ENCODE measurements at regions of chr3 and their contacts with region 1.

Region 1: GRCh38 chr3:58217209-58217811 is 6.5 kb upstream of the DNASE1L3 start:
- DNase-seq: peak; percentile 27 to 69 (median 45)
- H3K4me3 ChIP-seq: no peak overlapping the region
- H3K4me3 Mint-ChIP-seq: peak overlapping the region in 1 of 7 donors; percentile 21
- H3K27ac ChIP-seq: no peak overlapping the region
- H3K27ac Mint-ChIP-seq: no peak overlapping the region
- H3K4me1 ChIP-seq: peaks cover 6% of the 10 kb centered on the region
- H3K4me1 Mint-ChIP-seq: peaks cover 6 to 15% (median 14%) of the 10 kb centered on the region in 3 donors
- H3K27me3 ChIP-seq: no peaks in the 10 kb centered on the region
- H3K27me3 Mint-ChIP-seq: peaks cover 3 to 6% of the 10 kb centered on the region in 2 donors

Region 2: GRCh38 chr3:57942388-57942787 is 274.9 kb before region 1 on chr3:
- CTCF ChIA-PET with region 1: no interaction called
- POLR2A ChIA-PET with region 1: interaction called, 11 read pairs
- DNase-seq: no peak
- H3K4me3 ChIP-seq: no peak overlapping the region
- H3K4me3 Mint-ChIP-seq: no peak overlapping the region
- H3K27ac ChIP-seq: no peak overlapping the region
- H3K27ac Mint-ChIP-seq: no peak overlapping the region
- H3K4me1 ChIP-seq: no peaks in the 10 kb centered on the region
- H3K4me1 Mint-ChIP-seq: no peaks in the 10 kb centered on the region
- H3K27me3 ChIP-seq: no peaks in the 10 kb centered on the region
- H3K27me3 Mint-ChIP-seq: peaks cover 0 to under 1% of the 10 kb centered on the region in 2 donors

Region 3: DNA sequence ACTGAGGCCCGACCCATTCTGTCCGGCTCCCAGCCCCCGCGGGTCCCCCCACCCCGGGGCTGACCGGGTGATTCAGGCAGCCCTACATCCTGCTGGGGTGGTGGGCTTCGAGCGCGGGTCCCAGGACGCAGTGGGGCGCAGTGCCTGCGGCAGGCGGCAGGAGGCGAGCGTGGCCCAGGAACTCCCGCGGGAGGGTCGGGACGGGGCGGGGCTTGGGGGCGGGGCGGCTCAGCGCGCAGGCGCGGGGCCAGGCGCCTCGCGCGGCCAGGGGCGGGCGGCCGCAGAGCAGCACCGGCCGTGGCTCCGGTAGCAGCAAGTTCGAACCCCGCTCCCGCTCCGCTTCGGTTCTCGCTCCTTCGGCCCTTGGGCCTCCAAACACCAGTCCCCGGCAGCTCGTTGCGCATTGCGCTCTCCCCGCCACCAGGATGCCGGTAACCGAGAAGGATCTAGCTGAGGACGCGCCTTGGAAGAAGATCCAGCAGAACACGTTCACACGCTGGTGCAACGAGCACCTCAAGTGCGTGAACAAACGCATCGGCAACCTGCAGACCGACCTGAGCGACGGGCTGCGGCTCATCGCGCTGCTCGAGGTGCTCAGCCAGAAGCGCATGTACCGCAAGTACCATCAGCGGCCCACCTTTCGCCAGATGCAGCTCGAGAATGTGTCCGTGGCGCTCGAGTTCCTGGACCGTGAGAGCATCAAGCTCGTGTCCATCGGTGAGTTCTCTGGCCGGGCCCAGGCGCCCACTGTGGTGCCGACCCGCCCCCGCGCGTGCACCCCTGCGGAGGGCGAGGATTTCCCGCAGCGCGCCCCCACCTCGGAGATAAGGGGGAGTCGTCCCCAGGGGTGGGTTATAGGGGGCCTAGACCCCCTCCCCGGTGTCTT is 208.9 kb before region 1 on chr3 and contains the start of gene FLNB:
- CTCF ChIA-PET with region 1: interaction called, 13 read pairs
- POLR2A ChIA-PET with region 1: interaction called, 3 read pairs
- DNase-seq: peak; percentile 68 to 82 (median 73)
- H3K4me3 ChIP-seq: peak within 1 kb of the TSS; percentile 99
- H3K4me3 Mint-ChIP-seq: peak within 1 kb of the TSS; percentile 73 to 93 (median 90)
- H3K27ac ChIP-seq: peak within 1 kb of the TSS; percentile 73
- H3K27ac Mint-ChIP-seq: peak within 1 kb of the TSS; percentile 17 to 92 (median 74)
- H3K4me1 ChIP-seq: peaks cover 29% of the 10 kb centered on the region
- H3K4me1 Mint-ChIP-seq: peaks cover 27 to 45% (median 30%) of the 10 kb centered on the region in 3 donors
- H3K27me3 ChIP-seq: no peaks in the 10 kb centered on the region
- H3K27me3 Mint-ChIP-seq: no peaks in the 10 kb centered on the region
- total RNA-seq, gene FLNB: 11.5 to 12.8 TPM

Region 4: DNA sequence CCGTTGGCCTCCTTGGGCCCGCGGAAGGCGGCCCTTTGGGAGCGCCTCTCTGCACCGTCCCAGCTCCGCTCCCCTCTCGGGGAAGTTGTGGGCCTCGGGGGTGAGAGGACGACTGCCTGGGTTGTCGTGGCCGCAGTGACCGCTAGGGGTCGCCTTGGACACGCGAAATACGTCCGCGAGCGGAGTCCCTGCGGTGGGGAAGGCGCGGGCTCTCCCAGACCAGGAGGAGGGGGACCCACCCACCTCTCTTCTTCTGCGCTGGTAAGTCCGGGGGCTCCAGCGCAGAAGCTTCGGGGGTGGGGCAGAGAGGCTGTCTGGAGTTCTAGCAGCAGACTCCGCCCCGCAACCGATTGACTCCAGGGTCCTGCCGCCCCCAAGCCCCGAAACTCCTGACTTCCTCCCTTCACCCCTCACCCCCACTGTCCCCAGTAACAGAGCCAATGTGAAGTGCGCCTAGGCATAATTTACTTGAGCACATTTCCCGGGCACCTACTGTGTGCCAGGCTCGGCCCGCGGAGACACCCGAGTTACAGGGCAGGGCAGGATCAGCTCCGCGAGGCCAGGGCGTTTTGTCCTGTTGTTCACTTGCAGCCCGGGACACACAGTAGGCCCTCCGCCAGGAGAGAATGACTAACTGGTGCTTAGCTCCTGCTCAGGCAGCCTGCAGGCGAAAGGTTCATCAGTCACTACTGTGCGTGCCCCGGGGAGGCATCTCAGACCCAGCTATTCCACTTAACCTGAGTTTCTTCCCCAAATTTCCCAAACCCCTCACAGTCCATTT is 39.4 kb before region 1 on chr3:
- CTCF ChIA-PET with region 1: interaction called, 19 read pairs
- POLR2A ChIA-PET with region 1: no interaction called
- DNase-seq: peak; percentile 72 to 89 (median 84)
- H3K4me3 ChIP-seq: peak overlapping the region; percentile 55
- H3K4me3 Mint-ChIP-seq: peak overlapping the region; percentile 61 to 89 (median 71)
- H3K27ac ChIP-seq: no peak overlapping the region
- H3K27ac Mint-ChIP-seq: peak overlapping the region in 2 of 8 donors; percentile 33 to 48
- H3K4me1 ChIP-seq: peaks cover 10% of the 10 kb centered on the region
- H3K4me1 Mint-ChIP-seq: peaks cover 7 to 18% (median 10%) of the 10 kb centered on the region in 3 donors
- H3K27me3 ChIP-seq: no peaks in the 10 kb centered on the region
- H3K27me3 Mint-ChIP-seq: peaks cover 0 to 5% of the 10 kb centered on the region in 2 donors

Region 5: GRCh38 chr3:58188173-58188564 is 29.1 kb before region 1 on chr3:
- CTCF ChIA-PET with region 1: interaction called, 12 read pairs
- POLR2A ChIA-PET with region 1: no interaction called
- DNase-seq: no peak
- H3K4me3 ChIP-seq: no peak overlapping the region
- H3K4me3 Mint-ChIP-seq: no peak overlapping the region
- H3K27ac ChIP-seq: no peak overlapping the region
- H3K27ac Mint-ChIP-seq: no peak overlapping the region
- H3K4me1 ChIP-seq: no peaks in the 10 kb centered on the region
- H3K4me1 Mint-ChIP-seq: peaks cover 0 to 3% (median 0%) of the 10 kb centered on the region in 3 donors
- H3K27me3 ChIP-seq: no peaks in the 10 kb centered on the region
- H3K27me3 Mint-ChIP-seq: no peaks in the 10 kb centered on the region

Region 6: DNA sequence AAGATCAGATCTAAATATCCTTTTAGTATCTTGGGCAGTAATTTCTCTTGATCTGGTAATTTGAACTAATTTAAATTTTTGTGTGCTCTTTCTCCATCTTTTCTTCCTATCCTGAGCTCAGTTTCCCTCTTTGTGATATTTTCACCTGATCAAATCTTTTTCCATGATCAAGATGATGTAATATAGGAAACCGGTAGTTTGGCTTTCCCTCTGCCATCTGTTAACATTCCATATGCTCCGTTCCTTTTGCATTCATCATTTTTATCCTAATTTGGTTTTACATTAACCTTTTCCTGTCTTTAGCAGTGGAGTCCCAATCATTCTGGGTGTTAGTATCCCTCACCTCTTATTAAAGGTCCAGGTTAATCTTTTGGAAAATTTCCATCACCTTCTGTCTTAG is 14.4 kb after region 1 on chr3:
- CTCF ChIA-PET with region 1: interaction called, 13 read pairs
- POLR2A ChIA-PET with region 1: no interaction called
- DNase-seq: no peak
- H3K4me3 ChIP-seq: no peak overlapping the region
- H3K4me3 Mint-ChIP-seq: no peak overlapping the region
- H3K27ac ChIP-seq: no peak overlapping the region
- H3K27ac Mint-ChIP-seq: no peak overlapping the region
- H3K4me1 ChIP-seq: peaks cover 3% of the 10 kb centered on the region
- H3K4me1 Mint-ChIP-seq: peaks cover 0 to 4% (median 4%) of the 10 kb centered on the region in 3 donors
- H3K27me3 ChIP-seq: no peaks in the 10 kb centered on the region
- H3K27me3 Mint-ChIP-seq: peaks cover 14 to 49% of the 10 kb centered on the region in 2 donors

Measured in CD8-positive, alpha-beta memory T cell (primary cell).